Ovary (tissue), 10 donors: ENCODE measurements at regions of chrX and their contacts with region 1.

Region 1: GRCh38 chrX:141903400-141904155 is at the start of gene MAGEC1:
- DNase-seq: no peak
- H3K4me3 ChIP-seq: no peak within 1 kb of the TSS
- H3K27ac ChIP-seq: no peak within 1 kb of the TSS
- H3K4me1 ChIP-seq: no peaks in the 10 kb centered on the region
- H3K27me3 ChIP-seq: no peaks in the 10 kb centered on the region
- CTCF ChIP-seq: no peak
- EP300 ChIP-seq: no peak
- POLR2A ChIP-seq: no peak
- total RNA-seq, gene MAGEC1: not detected

Region 2: DNA sequence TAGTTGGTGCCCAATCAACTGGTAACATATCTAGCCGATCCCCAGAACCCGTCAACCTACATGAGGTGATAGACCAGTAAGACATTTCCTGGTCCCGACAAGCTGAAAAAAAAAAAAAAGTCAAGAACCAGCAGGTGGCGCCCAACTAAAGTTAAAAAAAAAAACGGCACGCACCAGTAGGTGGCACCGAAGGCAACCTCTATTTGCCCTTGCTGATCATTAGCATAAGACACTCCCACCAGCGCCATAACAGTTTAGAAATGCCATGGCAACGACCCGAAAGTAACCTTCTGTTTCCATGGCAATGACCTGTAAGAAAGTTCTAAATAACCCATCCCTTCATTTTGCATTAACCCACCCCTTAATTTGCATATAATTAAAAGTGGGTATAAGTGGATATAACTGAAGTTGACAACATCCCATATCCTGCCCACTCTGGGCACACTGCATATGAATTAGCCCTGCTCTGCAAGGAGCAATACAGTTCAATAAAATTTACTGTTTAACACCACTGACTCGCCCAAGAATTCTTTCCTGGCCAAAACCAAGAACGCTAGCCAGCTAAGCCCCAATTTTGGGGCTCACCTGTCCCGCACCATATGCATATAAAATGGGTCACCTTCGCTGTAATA is 985.1 kb before region 1 on chrX:
- intact Hi-C with region 1: no loop called
- DNase-seq: peak in 2 of 5 donors; percentile 6 to 13
- H3K4me3 ChIP-seq: no peak overlapping the region
- H3K27ac ChIP-seq: no peak overlapping the region
- H3K4me1 ChIP-seq: no peaks in the 10 kb centered on the region
- H3K27me3 ChIP-seq: no peaks in the 10 kb centered on the region
- CTCF ChIP-seq: no peak
- EP300 ChIP-seq: no peak
- POLR2A ChIP-seq: no peak

Region 3: DNA sequence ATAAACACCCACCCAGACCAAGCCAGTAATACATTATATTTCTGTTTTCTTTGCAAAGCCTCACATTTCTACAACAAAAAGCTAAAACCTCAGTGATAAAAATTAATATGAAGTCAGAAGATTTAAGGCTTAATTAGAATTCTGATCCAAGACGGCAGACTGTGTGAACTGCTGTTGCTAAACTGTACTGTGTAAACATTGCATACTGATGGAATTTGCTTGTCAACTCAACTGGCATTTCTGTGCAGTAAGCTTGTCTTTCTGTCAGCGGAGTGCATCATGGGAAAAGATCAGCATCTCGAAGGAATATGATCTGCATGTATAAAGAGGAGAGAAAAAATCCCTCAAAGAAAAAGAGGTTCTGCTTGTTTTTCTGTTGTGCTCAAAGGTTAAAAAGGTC is 970.6 kb before region 1 on chrX:
- intact Hi-C with region 1: loop called in 1 of 4 experiments (anchors 5 kb)
- DNase-seq: no peak
- H3K4me3 ChIP-seq: no peak overlapping the region
- H3K27ac ChIP-seq: no peak overlapping the region
- H3K4me1 ChIP-seq: no peaks in the 10 kb centered on the region
- H3K27me3 ChIP-seq: no peaks in the 10 kb centered on the region
- CTCF ChIP-seq: no peak
- EP300 ChIP-seq: no peak
- POLR2A ChIP-seq: no peak